CD14-positive monocyte (primary cell): ENCODE measurements at regions of chrX and their contacts with region 1.

Region 1: GRCh38 chrX:14029425-14030173 is at the start of gene GEMIN8:
- DNase-seq: peak; percentile 75 to 84 (median 80)
- H3K4me3 ChIP-seq: peak within 1 kb of the TSS; percentile 49 to 80 (median 79)
- H3K4me3 Mint-ChIP-seq: peak within 1 kb of the TSS; percentile 86 to 97
- H3K27ac ChIP-seq: peak within 1 kb of the TSS; percentile 58 to 84
- H3K27ac Mint-ChIP-seq: peak within 1 kb of the TSS; percentile 93 to 99 (median 95)
- H3K4me1 ChIP-seq: peaks cover 12 to 15% of the 10 kb centered on the region in 2 donors
- H3K4me1 Mint-ChIP-seq: peaks cover 17% of the 10 kb centered on the region
- H3K27me3 ChIP-seq: peaks cover 0 to 22% of the 10 kb centered on the region in 2 donors
- H3K27me3 Mint-ChIP-seq: peaks cover 0 to 33% (median 1%) of the 10 kb centered on the region in 3 donors
- CTCF ChIP-seq: no peak
- polyA plus RNA-seq, gene GEMIN8: 10.9 to 15.0 (median 12.6) TPM

Region 2: GRCh38 chrX:13506574-13506973 is 523.0 kb before region 1 on chrX:
- intact Hi-C with region 1: loop called (anchors 5 kb)
- DNase-seq: peak; percentile 20 to 40 (median 36)
- H3K4me3 ChIP-seq: no peak overlapping the region
- H3K4me3 Mint-ChIP-seq: no peak overlapping the region
- H3K27ac ChIP-seq: no peak overlapping the region
- H3K27ac Mint-ChIP-seq: no peak overlapping the region
- H3K4me1 ChIP-seq: peaks cover 8 to 12% of the 10 kb centered on the region in 2 donors
- H3K4me1 Mint-ChIP-seq: peaks cover 12% of the 10 kb centered on the region
- H3K27me3 ChIP-seq: peaks cover 0 to 6% of the 10 kb centered on the region in 2 donors
- H3K27me3 Mint-ChIP-seq: peaks cover 0 to 8% (median 0%) of the 10 kb centered on the region in 3 donors
- CTCF ChIP-seq: peak; percentile 78

Region 3: DNA sequence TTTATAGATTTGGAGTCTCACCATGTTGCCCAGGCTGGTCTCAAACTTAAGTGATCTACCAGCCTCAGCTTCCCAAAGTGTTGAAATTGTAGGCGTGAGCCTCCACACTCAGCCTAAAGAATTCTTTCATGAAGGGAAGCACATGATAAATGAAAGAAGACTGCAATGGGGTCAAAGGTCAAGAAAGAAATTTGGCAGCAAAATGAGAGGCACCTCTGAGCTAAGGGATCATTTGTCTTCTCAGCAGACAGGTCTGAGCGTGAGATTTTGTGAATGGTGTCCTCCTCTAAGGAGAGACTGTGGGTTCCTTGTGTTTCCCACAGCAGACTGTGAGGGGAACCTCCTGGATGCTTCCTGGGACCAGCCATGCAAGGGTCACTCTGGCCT is 517.7 kb before region 1 on chrX:
- intact Hi-C with region 1: loop called (anchors 5 kb)
- DNase-seq: no peak
- H3K4me3 ChIP-seq: no peak overlapping the region
- H3K4me3 Mint-ChIP-seq: no peak overlapping the region
- H3K27ac ChIP-seq: no peak overlapping the region
- H3K27ac Mint-ChIP-seq: no peak overlapping the region
- H3K4me1 ChIP-seq: no peaks in the 10 kb centered on the region
- H3K4me1 Mint-ChIP-seq: no peaks in the 10 kb centered on the region
- H3K27me3 ChIP-seq: peaks cover 0 to 5% of the 10 kb centered on the region in 2 donors
- H3K27me3 Mint-ChIP-seq: peaks cover 0 to 14% (median 0%) of the 10 kb centered on the region in 3 donors
- CTCF ChIP-seq: no peak

Region 4: GRCh38 chrX:13658602-13659001 is 371.0 kb before region 1 on chrX:
- intact Hi-C with region 1: loop called in 1 of 2 experiments (anchors 5 kb)
- DNase-seq: peak in 2 of 3 donors; percentile 44 to 58
- H3K4me3 ChIP-seq: peak overlapping the region in 1 of 3 experiments; percentile 41
- H3K4me3 Mint-ChIP-seq: peak overlapping the region; percentile 37 to 46
- H3K27ac ChIP-seq: peak overlapping the region in 1 of 2 donors; percentile 72
- H3K27ac Mint-ChIP-seq: peak overlapping the region; percentile 83 to 93 (median 89)
- H3K4me1 ChIP-seq: peaks cover 28 to 42% of the 10 kb centered on the region in 2 donors
- H3K4me1 Mint-ChIP-seq: peaks cover 28% of the 10 kb centered on the region
- H3K27me3 ChIP-seq: no peaks in the 10 kb centered on the region
- H3K27me3 Mint-ChIP-seq: peaks cover 0 to 15% (median 1%) of the 10 kb centered on the region in 3 donors
- CTCF ChIP-seq: peak; percentile 62

Region 5: GRCh38 chrX:13747836-13748235 is 281.8 kb before region 1 on chrX:
- intact Hi-C with region 1: loop called in 1 of 2 experiments (anchors 10 kb)
- DNase-seq: peak in 2 of 3 donors; percentile 31 to 42
- H3K4me3 ChIP-seq: no peak overlapping the region
- H3K4me3 Mint-ChIP-seq: no peak overlapping the region
- H3K27ac ChIP-seq: no peak overlapping the region
- H3K27ac Mint-ChIP-seq: peak overlapping the region in 3 of 7 donors; percentile 31 to 43 (median 33)
- H3K4me1 ChIP-seq: peaks cover 8 to 10% of the 10 kb centered on the region in 2 donors
- H3K4me1 Mint-ChIP-seq: peaks cover 13% of the 10 kb centered on the region
- H3K27me3 ChIP-seq: no peaks in the 10 kb centered on the region
- H3K27me3 Mint-ChIP-seq: peaks cover 0 to 8% (median 0%) of the 10 kb centered on the region in 3 donors
- CTCF ChIP-seq: peak; percentile 52

Region 6: DNA sequence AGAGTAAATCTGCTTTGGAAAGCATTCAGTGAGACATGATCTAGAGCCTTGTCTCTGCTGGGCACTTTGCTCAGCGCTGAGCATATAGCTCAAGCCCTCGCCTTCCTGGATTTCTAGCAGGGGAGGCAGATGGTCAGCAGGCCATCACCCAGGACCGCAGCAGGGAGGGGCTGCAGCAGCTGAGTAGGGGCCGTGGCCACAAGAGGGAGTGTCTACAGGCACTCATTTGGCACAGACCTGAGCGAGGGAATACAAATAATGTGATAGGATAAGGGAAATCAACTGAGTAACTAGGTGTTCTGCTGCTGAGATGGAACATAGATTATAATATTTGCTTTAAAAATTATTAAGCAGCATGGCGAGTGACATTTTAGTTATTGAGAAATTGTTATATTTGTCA is 264.8 kb before region 1 on chrX:
- intact Hi-C with region 1: loop called in 1 of 2 experiments (anchors 10 kb)
- DNase-seq: no peak
- H3K4me3 ChIP-seq: peak overlapping the region in 1 of 3 experiments; percentile 47
- H3K4me3 Mint-ChIP-seq: no peak overlapping the region
- H3K27ac ChIP-seq: no peak overlapping the region
- H3K27ac Mint-ChIP-seq: peak overlapping the region in 1 of 7 donors; percentile 19
- H3K4me1 ChIP-seq: peaks cover 47% of the 10 kb centered on the region in 2 donors
- H3K4me1 Mint-ChIP-seq: peaks cover 47% of the 10 kb centered on the region
- H3K27me3 ChIP-seq: no peaks in the 10 kb centered on the region
- H3K27me3 Mint-ChIP-seq: peaks cover 0 to 10% (median 0%) of the 10 kb centered on the region in 3 donors
- CTCF ChIP-seq: no peak